Posterior vena cava (tissue), 2 donors: ENCODE measurements at regions of chr12 and their contacts with region 1.

Region 1: GRCh38 chr12:93778306-93778705 is 101.1 kb downstream of the CRADD start:
- DNase-seq: no peak

Region 2: GRCh38 chr12:93803424-93803807 is 25.1 kb after region 1 on chr12:
- intact Hi-C with region 1: no loop called
- DNase-seq: no peak

Region 3: GRCh38 chr12:93813972-93814821 is 35.9 kb after region 1 on chr12:
- intact Hi-C with region 1: loop called in 1 of 2 experiments (anchors 5 kb)
- DNase-seq: peak; percentile 93